Sigmoid colon (tissue), 7 donors: ENCODE measurements at regions of chr18 and their contacts with region 1.

Region 1: DNA sequence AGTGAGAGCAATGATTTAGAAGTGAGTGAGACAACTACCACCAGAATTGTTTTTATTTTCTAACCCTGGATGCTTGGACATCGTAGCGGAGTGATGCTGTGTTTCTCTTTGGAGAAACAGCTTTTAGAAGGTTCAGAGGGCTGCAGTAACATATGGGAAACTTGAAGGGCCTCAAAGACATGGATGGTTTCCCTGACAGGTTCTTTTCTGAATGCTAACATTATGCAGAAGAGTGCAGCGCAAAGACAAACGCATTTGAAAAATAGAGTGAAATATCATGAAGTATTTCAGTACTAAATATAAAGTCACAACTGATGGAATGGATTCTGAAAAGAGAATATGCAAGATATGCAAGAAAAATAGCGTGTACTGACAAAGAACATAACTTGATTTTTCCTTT is 385.1 kb upstream of the DSEL start:
- DNase-seq: no peak
- H3K4me3 ChIP-seq: no peak overlapping the region
- H3K27ac ChIP-seq: no peak overlapping the region
- H3K4me1 ChIP-seq: no peaks in the 10 kb centered on the region
- H3K27me3 ChIP-seq: no peaks in the 10 kb centered on the region
- CTCF ChIP-seq: no peak
- EP300 ChIP-seq: no peak
- POLR2A ChIP-seq: no peak

Region 2: GRCh38 chr18:67884429-67884828 is 17.1 kb before region 1 on chr18:
- intact Hi-C with region 1: no loop called
- DNase-seq: no peak
- H3K4me3 ChIP-seq: no peak overlapping the region
- H3K27ac ChIP-seq: no peak overlapping the region
- H3K4me1 ChIP-seq: no peaks in the 10 kb centered on the region
- H3K27me3 ChIP-seq: no peaks in the 10 kb centered on the region
- CTCF ChIP-seq: no peak
- EP300 ChIP-seq: no peak
- POLR2A ChIP-seq: no peak

Region 3: GRCh38 chr18:68642003-68642402 is 740.4 kb after region 1 on chr18:
- intact Hi-C with region 1: loop called (anchors 5 kb)
- DNase-seq: no peak
- H3K4me3 ChIP-seq: no peak overlapping the region
- H3K27ac ChIP-seq: no peak overlapping the region
- H3K4me1 ChIP-seq: no peaks in the 10 kb centered on the region
- H3K27me3 ChIP-seq: no peaks in the 10 kb centered on the region
- CTCF ChIP-seq: no peak
- EP300 ChIP-seq: no peak
- POLR2A ChIP-seq: no peak